Dorsolateral prefrontal cortex (tissue), 120 donors: ENCODE measurements at regions of chr9 and their contacts with region 1.

Region 1: DNA sequence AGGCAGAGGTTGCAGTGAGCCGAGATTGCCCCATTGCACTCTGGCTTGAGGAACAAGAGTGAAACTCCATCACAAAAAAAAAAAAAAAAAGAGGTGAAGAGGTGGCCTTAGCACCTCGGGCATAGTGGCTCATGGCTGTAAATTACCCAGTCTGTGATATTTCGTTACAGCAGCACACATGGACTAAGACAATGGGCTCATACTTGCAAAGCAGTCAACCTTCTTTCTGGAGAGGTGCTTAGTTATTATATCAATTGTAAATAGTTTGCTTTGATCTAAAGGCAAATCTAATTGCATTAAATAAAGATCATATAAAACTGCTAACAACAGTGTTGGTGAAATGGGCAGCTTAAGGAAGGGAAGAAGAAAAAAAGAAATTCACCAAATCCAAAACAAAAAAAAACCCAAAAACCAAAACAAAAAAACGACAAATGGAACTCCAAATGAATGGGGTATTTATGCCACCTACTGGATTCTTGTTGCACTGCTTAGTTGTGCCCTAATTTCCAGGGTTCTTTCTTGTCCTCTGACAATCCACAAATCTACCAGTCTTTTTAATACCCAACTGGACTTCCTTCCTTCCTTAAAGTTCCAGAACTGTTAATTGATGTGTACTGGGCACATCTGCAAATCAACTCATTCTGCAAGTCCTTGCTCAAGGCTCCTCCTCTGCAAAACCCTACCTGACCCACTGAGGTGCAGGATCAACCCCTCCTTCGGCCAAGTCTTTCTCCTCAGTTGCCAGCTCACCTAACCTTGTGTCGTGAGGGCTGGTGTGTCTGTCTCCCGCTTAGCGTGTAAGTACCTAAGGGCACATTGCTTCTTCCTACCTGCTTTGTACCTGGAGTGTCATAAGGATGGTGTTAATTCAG is 35.0 kb upstream of the DMRT1 start:
- DNase-seq: no peak
- H3K4me3 ChIP-seq: no peak overlapping the region
- H3K27ac ChIP-seq: no peak overlapping the region
- H3K27me3 ChIP-seq: no peaks in the 10 kb centered on the region
- CTCF ChIP-seq: peak; percentile 46 to 90 (median 80)

Region 2: DNA sequence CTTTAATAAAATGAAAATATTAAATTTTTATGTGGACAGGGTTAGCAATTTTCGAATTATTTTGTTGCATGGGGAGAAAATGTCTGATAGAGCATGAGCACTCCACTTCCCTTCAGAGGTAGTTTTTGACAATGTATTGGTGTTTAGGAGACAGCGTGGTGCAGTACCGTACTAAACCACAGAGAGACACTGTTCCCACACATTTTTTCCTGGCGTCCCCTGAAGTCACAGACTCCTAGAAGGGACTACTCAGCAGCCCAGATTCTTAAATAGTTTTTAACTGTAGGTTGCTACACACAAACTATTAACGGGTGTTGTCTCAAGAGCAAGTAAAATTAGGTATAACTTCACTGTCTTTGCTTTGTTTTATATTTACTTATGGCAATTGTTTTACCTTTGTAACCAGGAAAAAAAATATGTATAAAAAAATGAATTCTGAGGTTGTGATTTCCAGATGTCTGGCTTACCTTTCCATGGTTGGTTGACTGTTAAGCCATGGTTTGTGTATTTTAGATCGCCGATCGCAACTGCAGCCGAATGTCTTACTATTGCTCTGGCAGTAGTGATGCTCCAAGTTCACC is 420.6 kb before region 1 on chr9:
- intact Hi-C with region 1: loop called in 1 of 2 experiments (anchors 10 kb)
- DNase-seq: peak in 7 of 10 donors; percentile 28 to 65 (median 52)
- H3K4me3 ChIP-seq: no peak overlapping the region
- H3K27ac ChIP-seq: no peak overlapping the region
- H3K27me3 ChIP-seq: peaks cover 0 to 4% (median 0%) of the 10 kb centered on the region in 45 donors
- CTCF ChIP-seq: peak; percentile 59 to 97 (median 88)